ENCODE measurements at regions of chr1 and their contacts with region 1.

Region 1: GRCh38 chr1:156689035-156689952 is 12.1 kb upstream of the NES start:
- DNase-seq: peak; percentile 77
- H3K4me3 ChIP-seq: peak overlapping the region in 1 of 3 experiments; percentile 27
- H3K27ac ChIP-seq: no peak overlapping the region
- H3K4me1 ChIP-seq: peaks cover 49% of the 10 kb centered on the region
- H3K27me3 ChIP-seq: no peaks in the 10 kb centered on the region
- CTCF ChIP-seq: peak; percentile 85 to 94

Region 2: DNA sequence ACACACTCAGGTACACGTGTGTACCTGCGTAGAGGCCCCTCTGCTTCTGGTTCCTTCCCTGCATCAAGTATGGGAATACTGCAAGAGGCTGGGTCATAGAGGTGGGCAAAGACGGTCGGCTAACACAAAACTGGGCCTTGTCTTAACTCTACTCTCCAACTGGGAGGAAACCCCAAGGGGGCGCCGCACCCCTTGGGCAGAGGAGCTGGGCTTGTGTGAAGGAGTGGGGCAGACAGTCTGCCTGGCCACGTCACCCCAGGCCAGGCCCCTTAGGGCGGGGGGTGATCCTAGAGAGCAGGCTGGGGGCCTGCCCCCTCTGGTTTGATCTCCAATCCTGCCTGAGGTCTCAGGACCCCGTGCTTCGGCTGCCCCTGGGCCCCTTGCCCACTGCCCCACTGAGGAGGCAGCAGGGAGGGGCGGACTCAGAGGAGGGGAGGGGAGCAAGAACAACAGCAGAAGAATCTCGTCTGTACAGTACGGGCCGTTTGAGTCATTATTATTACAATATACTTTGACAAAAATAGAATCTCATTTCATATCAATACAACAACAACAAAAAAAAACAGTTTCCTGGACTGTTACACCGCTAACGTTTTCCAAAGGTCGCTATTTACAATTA is 223.4 kb before region 1 on chr1:
- CTCF ChIA-PET with region 1: interaction called, 13 read pairs
- dilution Hi-C with region 1: no loop called
- in situ Hi-C with region 1: no loop called
- intact Hi-C with region 1: no loop called
- DNase-seq: no peak
- H3K4me3 ChIP-seq: no peak overlapping the region
- H3K27ac ChIP-seq: no peak overlapping the region
- H3K4me1 ChIP-seq: peaks cover 6% of the 10 kb centered on the region
- H3K27me3 ChIP-seq: no peaks in the 10 kb centered on the region
- CTCF ChIP-seq: peak in 1 of 2 donors; percentile 13

Region 3: GRCh38 chr1:156705918-156706656 is 16.8 kb after region 1 on chr1:
- CTCF ChIA-PET with region 1: interaction called, 4 read pairs
- dilution Hi-C with region 1: no loop called
- in situ Hi-C with region 1: no loop called
- intact Hi-C with region 1: loop called (anchors 1 kb)
- DNase-seq: no peak
- H3K4me3 ChIP-seq: peak overlapping the region; percentile 16 to 35 (median 22)
- H3K27ac ChIP-seq: no peak overlapping the region
- H3K4me1 ChIP-seq: peaks cover 54% of the 10 kb centered on the region
- H3K27me3 ChIP-seq: no peaks in the 10 kb centered on the region
- CTCF ChIP-seq: peak; percentile 59 to 89

Region 4: GRCh38 chr1:156717275-156717805 is 28.0 kb after region 1 on chr1:
- CTCF ChIA-PET with region 1: interaction called, 5 read pairs
- dilution Hi-C with region 1: loop called (anchors 5 kb)
- in situ Hi-C with region 1: no loop called
- intact Hi-C with region 1: no loop called
- DNase-seq: no peak
- H3K4me3 ChIP-seq: no peak overlapping the region
- H3K27ac ChIP-seq: no peak overlapping the region
- H3K4me1 ChIP-seq: peaks cover 3% of the 10 kb centered on the region
- H3K27me3 ChIP-seq: no peaks in the 10 kb centered on the region
- CTCF ChIP-seq: no peak

Region 5: GRCh38 chr1:156767101-156767878 is 78.0 kb after region 1 on chr1 and contains the start of gene PRCC:
- CTCF ChIA-PET with region 1: no interaction called
- dilution Hi-C with region 1: loop called (anchors 5 kb)
- in situ Hi-C with region 1: no loop called
- intact Hi-C with region 1: loop called (anchors 10 kb)
- DNase-seq: peak; percentile 100
- H3K4me3 ChIP-seq: peak within 1 kb of the TSS; percentile 65 to 99 (median 91)
- H3K27ac ChIP-seq: peak within 1 kb of the TSS; percentile 86
- H3K4me1 ChIP-seq: peaks cover 20% of the 10 kb centered on the region
- H3K27me3 ChIP-seq: no peaks in the 10 kb centered on the region
- CTCF ChIP-seq: no peak
- total RNA-seq, gene PRCC: 22.2 to 69.7 TPM

Region 6: DNA sequence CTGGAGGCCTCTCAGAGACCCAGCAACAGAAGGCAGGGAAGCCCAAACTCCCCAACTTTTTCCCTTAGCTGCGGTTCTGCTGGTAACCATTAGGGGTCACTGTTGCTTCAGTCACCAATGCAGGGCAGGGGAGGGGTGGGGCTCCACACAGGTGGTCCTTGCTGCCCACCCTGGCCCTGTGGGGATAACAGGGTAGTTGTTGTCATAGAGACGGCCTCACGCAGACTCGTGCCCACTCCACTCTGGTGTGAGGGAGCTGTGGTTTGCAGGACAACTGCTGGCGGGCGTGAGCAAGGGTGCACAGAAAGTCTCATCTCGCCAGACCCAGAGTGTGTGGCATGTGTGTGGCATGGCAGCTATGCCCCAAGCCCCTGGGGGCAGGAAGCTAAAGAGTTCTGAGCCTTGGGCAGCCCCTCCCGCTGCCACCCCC is 149.7 kb after region 1 on chr1:
- CTCF ChIA-PET with region 1: no interaction called
- dilution Hi-C with region 1: no loop called
- in situ Hi-C with region 1: no loop called
- intact Hi-C with region 1: no loop called
- DNase-seq: no peak
- H3K4me3 ChIP-seq: no peak overlapping the region
- H3K27ac ChIP-seq: no peak overlapping the region
- H3K4me1 ChIP-seq: no peaks in the 10 kb centered on the region
- H3K27me3 ChIP-seq: no peaks in the 10 kb centered on the region
- CTCF ChIP-seq: peak; percentile 85 to 88

Region 7: DNA sequence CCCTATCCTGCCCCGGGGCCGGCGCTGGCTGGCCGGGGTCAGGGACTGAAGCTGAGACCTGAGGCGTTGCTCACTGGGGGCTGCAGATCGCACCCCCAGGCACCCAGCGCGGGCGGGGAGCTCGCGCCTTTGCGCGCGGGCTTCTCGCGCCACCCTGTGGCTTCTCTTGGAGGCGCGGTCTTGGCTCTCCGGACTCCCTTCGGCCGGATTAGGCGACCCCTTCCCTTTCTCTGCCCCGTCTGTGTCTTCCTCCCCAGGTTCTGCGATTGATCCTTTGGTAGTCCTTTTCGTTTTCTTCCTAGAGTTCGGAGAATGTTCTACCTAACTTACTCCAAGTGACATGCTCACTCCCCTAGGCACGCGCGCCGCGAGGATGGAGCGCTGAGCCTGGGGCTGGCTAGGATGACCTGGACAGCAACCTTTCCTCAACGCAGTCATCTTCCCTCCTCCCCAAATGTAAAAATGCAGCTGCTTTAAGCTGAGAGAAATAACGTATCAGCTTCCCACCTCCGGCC is 170.9 kb after region 1 on chr1:
- CTCF ChIA-PET with region 1: interaction called, 22 read pairs
- dilution Hi-C with region 1: no loop called
- in situ Hi-C with region 1: loop called in 1 of 2 experiments (anchors 25 kb)
- intact Hi-C with region 1: loop called (anchors 1 kb)
- DNase-seq: peak; percentile 49
- H3K4me3 ChIP-seq: peak overlapping the region; percentile 31 to 46 (median 38)
- H3K27ac ChIP-seq: no peak overlapping the region
- H3K4me1 ChIP-seq: peaks cover 10% of the 10 kb centered on the region
- H3K27me3 ChIP-seq: peaks cover 27% of the 10 kb centered on the region
- CTCF ChIP-seq: peak; percentile 57 to 83